ENCODE measurements at regions of chr3 and their contacts with region 1.

Region 1: GRCh38 chr3:4494895-4495264 is 1.7 kb downstream of the ITPR1 start:
- DNase-seq: no peak
- ATAC-seq: no peak

Region 2: GRCh38 chr3:4438293-4438692 is 56.6 kb before region 1 on chr3:
- intact Hi-C with region 1: no loop called
- DNase-seq: no peak
- ATAC-seq: no peak

Region 3: GRCh38 chr3:4584456-4585249 is 89.8 kb after region 1 on chr3:
- intact Hi-C with region 1: loop called (anchors 5 kb)
- DNase-seq: no peak
- ATAC-seq: peak; percentile 14

Region 4: DNA sequence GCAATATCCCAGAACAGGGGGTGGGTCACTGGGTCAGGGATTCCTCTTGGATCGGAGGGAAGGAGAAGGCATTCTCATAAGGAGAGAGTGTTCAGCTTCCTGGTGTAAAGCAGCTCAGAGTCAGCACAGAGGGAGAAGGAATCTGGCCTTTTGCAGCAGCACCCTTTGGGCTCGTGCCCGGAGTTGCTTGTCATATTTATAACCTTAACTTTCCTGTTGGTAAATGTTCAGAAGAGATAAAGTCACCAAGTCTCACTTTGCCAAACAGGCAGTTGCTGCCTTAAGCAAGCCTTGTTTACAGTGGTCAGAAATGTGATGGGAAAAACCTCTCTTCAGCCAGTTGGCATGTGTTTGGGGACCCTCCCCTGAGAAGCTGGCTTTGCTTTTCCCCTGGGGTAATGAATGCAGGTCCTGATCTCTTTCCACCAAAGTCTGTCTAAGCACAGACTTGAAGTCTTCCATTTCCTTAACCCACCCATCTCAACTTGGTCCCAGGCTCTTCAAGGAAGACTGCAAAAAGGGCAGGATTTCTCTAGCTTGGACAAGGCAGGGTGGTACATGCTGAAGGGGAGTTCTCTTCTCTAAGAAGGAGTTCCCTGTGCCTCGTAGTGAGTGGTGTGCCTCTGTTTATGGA is 277.4 kb after region 1 on chr3:
- intact Hi-C with region 1: no loop called
- DNase-seq: peak; percentile 93
- ATAC-seq: peak; percentile 92